Endothelial cell of umbilical vein (primary cell): ENCODE measurements at regions of chr18 and their contacts with region 1.

Region 1: GRCh38 chr18:712401-713134 is at the start of gene ENOSF1:
- DNase-seq: peak; percentile 84
- H3K4me3 ChIP-seq: peak within 1 kb of the TSS; percentile 74 to 84 (median 82)
- H3K27ac ChIP-seq: peak within 1 kb of the TSS; percentile 49
- H3K4me1 ChIP-seq: peaks cover 5% of the 10 kb centered on the region
- H3K27me3 ChIP-seq: no peaks in the 10 kb centered on the region
- CTCF ChIP-seq: peak; percentile 72 to 92
- POLR2A ChIP-seq: peak; percentile 51
- total RNA-seq, gene ENOSF1: 50.5 and 52.5 TPM in 2 replicates

Region 2: GRCh38 chr18:658001-658946 is 54.3 kb before region 1 on chr18:
- CTCF ChIA-PET with region 1: interaction called, 10 read pairs
- POLR2A ChIA-PET with region 1: no interaction called
- dilution Hi-C with region 1: no loop called
- intact Hi-C with region 1: loop called (anchors 2 kb)
- DNase-seq: peak; percentile 93
- H3K4me3 ChIP-seq: peak overlapping the region; percentile 70 to 88 (median 82)
- H3K27ac ChIP-seq: peak overlapping the region; percentile 46
- H3K4me1 ChIP-seq: peaks cover 10% of the 10 kb centered on the region
- H3K27me3 ChIP-seq: no peaks in the 10 kb centered on the region
- CTCF ChIP-seq: no peak
- POLR2A ChIP-seq: peak; percentile 74